HepG2 (cell line): ENCODE measurements at regions of chr3 and their contacts with region 1.

Region 1: GRCh38 chr3:100708967-100709841 is at the start of gene TFG:
- DNase-seq: peak; percentile 97
- ATAC-seq: peak; percentile 98
- H3K4me3 ChIP-seq: peak within 1 kb of the TSS; percentile 68 to 91 (median 82)
- H3K27ac ChIP-seq: peak within 1 kb of the TSS; percentile 95
- H3K4me1 ChIP-seq: peaks cover 39% of the 10 kb centered on the region
- H3K27me3 ChIP-seq: no peaks in the 10 kb centered on the region; a peak in 1 of 5 replicates
- CTCF ChIP-seq: no peak
- EP300 ChIP-seq: peak in 1 of 2 experiments; percentile 14; a peak in 1 of 4 replicates
- POLR2A ChIP-seq: peak; percentile 63 to 64; a peak in 3 of 4 replicates
- RAD21 ChIP-seq: 0 out of 2 replicates have a peak, but pooled peaks have one; percentile 10
- total RNA-seq, gene TFG: 53.6 and 75.5 TPM in 2 replicates

Region 2: DNA sequence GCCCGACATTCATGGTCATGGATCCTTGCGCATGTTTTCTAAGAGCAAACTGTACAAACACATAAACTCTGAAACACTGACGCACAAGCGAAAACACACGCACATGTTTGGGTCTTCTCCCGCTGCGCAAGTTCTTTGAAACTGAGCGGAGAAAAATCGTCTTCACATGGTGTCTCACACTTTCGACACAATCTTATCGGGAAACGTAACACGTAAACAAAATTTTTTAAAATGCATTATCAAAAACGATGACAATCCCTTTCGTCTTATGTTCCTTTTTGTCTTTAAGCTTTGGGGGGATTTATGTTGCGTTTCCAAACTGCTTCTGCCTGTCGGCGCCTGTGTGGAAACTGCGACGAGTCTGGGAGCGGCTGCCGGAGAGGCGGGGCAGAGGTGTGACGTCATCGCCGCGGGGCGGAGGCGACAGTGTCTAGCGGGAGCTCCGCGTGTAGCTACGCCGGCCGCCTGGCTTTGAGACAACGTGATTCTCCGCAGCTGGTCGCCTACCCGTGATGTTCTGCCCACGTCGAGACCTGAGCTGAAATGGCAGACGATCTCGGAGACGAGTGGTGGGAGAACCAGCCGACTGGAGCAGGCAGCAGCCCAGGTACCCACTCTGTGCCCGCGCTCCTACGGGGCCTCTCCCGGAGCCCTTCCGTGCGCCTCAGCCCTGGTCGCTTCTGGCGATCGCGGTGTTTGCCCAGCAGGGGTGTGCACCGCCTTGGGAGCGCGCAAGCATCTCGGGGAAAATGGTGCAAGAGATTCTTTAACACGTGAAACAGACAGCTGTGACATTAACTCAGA is 891.6 kb before region 1 on chr3 and contains the start of gene CMSS1:
- CTCF ChIA-PET with region 1: no interaction called
- POLR2A ChIA-PET with region 1: no interaction called
- in situ Hi-C with region 1: loop called (anchors 25 kb)
- intact Hi-C with region 1: loop called (anchors 10 kb)
- DNase-seq: peak; percentile 77
- ATAC-seq: peak; percentile 98
- H3K4me3 ChIP-seq: peak within 1 kb of the TSS; percentile 74 to 90 (median 86)
- H3K27ac ChIP-seq: peak within 1 kb of the TSS; percentile 82
- H3K4me1 ChIP-seq: peaks cover 22% of the 10 kb centered on the region
- H3K27me3 ChIP-seq: no peaks in the 10 kb centered on the region; a peak in 1 of 5 replicates
- CTCF ChIP-seq: no peak
- EP300 ChIP-seq: peak in 1 of 2 experiments; percentile 56; a peak in 2 of 4 replicates
- POLR2A ChIP-seq: peak; percentile 79 to 80
- RAD21 ChIP-seq: peak; percentile 44; the same call in 1 of the 2 replicates
- total RNA-seq, gene CMSS1: 48.7 and 84.6 TPM in 2 replicates

Region 3: DNA sequence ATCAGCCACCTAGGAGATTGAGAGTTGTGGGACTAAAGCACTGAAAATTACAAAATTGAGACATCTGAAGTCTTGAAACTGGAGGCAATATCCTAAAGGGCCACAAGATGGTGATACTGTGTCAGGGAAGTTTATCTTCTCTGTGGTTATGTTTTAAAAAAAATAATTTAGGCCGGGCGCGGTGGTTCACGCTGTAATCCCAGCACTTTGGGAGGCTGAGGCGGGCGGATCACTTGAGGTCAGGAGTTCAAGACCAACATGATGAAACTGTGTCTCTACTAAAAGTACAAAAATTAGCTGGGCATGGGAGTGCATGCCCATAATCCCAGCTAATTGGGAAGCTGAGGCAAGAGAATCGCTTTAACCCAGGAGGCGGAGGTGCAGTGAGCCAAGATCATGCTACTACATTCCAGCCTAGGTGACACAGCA is 392.5 kb before region 1 on chr3:
- CTCF ChIA-PET with region 1: no interaction called
- POLR2A ChIA-PET with region 1: no interaction called
- in situ Hi-C with region 1: no loop called
- intact Hi-C with region 1: loop called (anchors 10 kb)
- DNase-seq: peak; percentile 39
- ATAC-seq: peak; percentile 72
- H3K4me3 ChIP-seq: no peak overlapping the region
- H3K27ac ChIP-seq: no peak overlapping the region
- H3K4me1 ChIP-seq: no peaks in the 10 kb centered on the region
- H3K27me3 ChIP-seq: no peaks in the 10 kb centered on the region
- CTCF ChIP-seq: peak; percentile 63
- EP300 ChIP-seq: no peak
- POLR2A ChIP-seq: no peak
- RAD21 ChIP-seq: peak; percentile 48; the same call in 1 of the 2 replicates

Region 4: GRCh38 chr3:100603469-100603868 is 105.7 kb before region 1 on chr3:
- CTCF ChIA-PET with region 1: no interaction called
- POLR2A ChIA-PET with region 1: interaction called, 4 read pairs
- in situ Hi-C with region 1: loop called (anchors 25 kb)
- intact Hi-C with region 1: loop called (anchors 1 kb)
- DNase-seq: peak; percentile 38
- ATAC-seq: peak; percentile 86
- H3K4me3 ChIP-seq: peak overlapping the region in 1 of 3 experiments; percentile 17; a peak in 1 of 6 replicates
- H3K27ac ChIP-seq: no peak overlapping the region
- H3K4me1 ChIP-seq: peaks cover 39% of the 10 kb centered on the region
- H3K27me3 ChIP-seq: no peaks in the 10 kb centered on the region
- CTCF ChIP-seq: peak; percentile 62
- EP300 ChIP-seq: no peak
- POLR2A ChIP-seq: no peak
- RAD21 ChIP-seq: no peak

Region 5: DNA sequence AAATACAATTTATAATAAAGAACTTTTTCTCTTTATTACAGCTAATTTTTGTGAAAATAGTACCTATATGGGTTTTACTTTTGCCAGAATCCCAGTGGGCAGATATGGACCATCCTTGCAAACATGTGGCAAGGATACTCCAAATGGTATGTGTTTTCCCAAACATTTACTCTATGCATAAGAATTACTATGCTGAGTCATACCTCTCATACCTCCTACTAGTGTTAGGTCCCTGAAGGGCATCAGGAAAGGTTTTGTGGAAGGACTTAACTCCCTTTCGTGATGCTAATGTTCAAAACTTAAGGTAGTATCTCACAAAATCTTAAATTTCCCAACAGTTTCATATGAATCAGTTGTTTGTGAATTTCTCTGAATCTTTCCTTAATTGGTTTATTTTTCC is 78.5 kb before region 1 on chr3:
- CTCF ChIA-PET with region 1: no interaction called
- POLR2A ChIA-PET with region 1: no interaction called
- in situ Hi-C with region 1: no loop called
- intact Hi-C with region 1: no loop called
- DNase-seq: no peak
- ATAC-seq: no peak
- H3K4me3 ChIP-seq: no peak overlapping the region
- H3K27ac ChIP-seq: no peak overlapping the region
- H3K4me1 ChIP-seq: peaks cover 12% of the 10 kb centered on the region
- H3K27me3 ChIP-seq: no peaks in the 10 kb centered on the region
- CTCF ChIP-seq: no peak
- EP300 ChIP-seq: no peak
- POLR2A ChIP-seq: no peak
- RAD21 ChIP-seq: no peak

Region 6: DNA sequence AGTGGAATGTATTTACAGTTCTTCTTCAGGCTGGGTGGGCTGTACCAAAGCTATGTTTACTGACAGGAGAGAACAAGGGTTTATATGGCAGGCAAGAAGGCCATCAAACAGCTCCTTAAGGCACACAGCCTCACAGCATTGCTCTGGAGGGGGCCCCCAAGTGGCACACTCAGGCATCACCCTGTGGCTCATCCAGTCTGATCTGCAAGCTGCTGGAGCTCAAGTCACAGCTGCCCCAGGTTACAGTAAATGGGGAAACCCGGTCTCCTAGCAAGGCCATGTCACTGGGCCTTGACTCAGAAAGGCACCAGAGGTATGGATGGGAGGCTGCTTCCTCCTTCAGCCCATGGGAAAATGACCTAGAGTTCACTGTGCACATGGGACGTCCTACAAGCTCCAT is 67.5 kb after region 1 on chr3:
- CTCF ChIA-PET with region 1: no interaction called
- POLR2A ChIA-PET with region 1: no interaction called
- in situ Hi-C with region 1: no loop called
- intact Hi-C with region 1: no loop called
- DNase-seq: no peak
- ATAC-seq: peak; percentile 42; the same call in 2 of the 3 replicates
- H3K4me3 ChIP-seq: no peak overlapping the region
- H3K27ac ChIP-seq: no peak overlapping the region
- H3K4me1 ChIP-seq: no peaks in the 10 kb centered on the region
- H3K27me3 ChIP-seq: no peaks in the 10 kb centered on the region
- CTCF ChIP-seq: no peak
- EP300 ChIP-seq: no peak
- POLR2A ChIP-seq: no peak
- RAD21 ChIP-seq: no peak

Region 7: DNA sequence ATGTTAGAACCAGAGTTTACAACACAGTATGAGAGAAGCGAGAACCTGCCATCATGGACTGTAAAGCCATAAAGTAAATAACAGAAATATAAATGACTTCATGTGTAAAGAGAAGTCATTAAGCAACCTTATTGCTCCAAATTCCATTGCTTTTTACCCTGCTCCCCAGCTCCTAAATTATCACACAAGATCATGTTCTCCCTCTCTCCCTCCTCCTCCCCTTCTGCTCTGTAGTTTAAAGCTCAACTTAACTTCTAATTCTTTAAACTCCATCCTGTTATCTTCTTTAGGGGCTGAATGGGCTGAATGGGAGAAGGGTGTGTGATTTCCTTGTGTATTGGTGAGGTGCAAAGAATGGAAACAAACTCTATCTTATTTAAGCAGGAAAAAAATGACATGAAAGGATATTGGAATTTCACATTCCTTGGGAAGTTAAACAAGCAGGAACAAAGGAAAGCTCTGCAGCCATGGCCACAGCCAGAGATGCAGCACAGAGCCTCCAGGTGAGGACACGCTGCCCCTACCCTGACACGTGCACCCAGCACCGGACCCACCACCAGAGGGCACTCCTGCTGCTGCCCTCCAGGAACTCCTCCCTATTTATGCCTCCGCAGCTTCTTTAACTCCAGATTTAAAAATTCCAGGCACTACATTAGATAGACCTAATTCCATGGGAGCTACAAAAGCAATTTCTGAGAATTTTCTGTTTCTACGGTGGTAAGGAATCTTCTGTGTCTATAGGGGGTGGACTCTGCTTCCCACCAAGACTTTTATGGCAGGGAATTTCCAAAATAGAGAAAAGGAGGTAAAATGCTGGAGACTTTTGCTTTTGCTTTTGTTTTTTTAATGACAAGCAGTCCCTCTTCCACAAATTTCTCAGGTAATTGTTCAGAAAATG is 360.9 kb after region 1 on chr3:
- CTCF ChIA-PET with region 1: no interaction called
- POLR2A ChIA-PET with region 1: no interaction called
- in situ Hi-C with region 1: no loop called
- intact Hi-C with region 1: no loop called
- DNase-seq: peak; percentile 31
- ATAC-seq: peak; percentile 99
- H3K4me3 ChIP-seq: no peak overlapping the region
- H3K27ac ChIP-seq: no peak overlapping the region
- H3K4me1 ChIP-seq: no peaks in the 10 kb centered on the region
- H3K27me3 ChIP-seq: no peaks in the 10 kb centered on the region; a peak in 1 of 5 replicates
- CTCF ChIP-seq: peak; percentile 79
- EP300 ChIP-seq: no peak
- POLR2A ChIP-seq: no peak
- RAD21 ChIP-seq: peak; percentile 46; the same call in 1 of the 2 replicates